ENCODE measurements at regions of chr16 and their contacts with region 1.

Region 1: GRCh38 chr16:87076950-87077749 is 240.0 kb downstream of the C16orf95 start:
- DNase-seq: peak; percentile 70 to 81 (median 71)
- H3K4me3 ChIP-seq: no peak overlapping the region
- H3K27ac ChIP-seq: no peak overlapping the region
- H3K4me1 ChIP-seq: no peaks in the 10 kb centered on the region
- H3K27me3 ChIP-seq: peaks cover 0 to 7% (median 0%) of the 10 kb centered on the region in 5 experiments

Region 2: GRCh38 chr16:87056083-87056482 is 21.1 kb before region 1 on chr16:
- CTCF ChIA-PET with region 1: interaction called, 66 read pairs
- POLR2A ChIA-PET with region 1: no interaction called
- DNase-seq: no peak
- H3K4me3 ChIP-seq: no peak overlapping the region
- H3K27ac ChIP-seq: no peak overlapping the region
- H3K4me1 ChIP-seq: peaks cover 7 to 10% (median 9%) of the 10 kb centered on the region in 4 experiments
- H3K27me3 ChIP-seq: peaks cover 0 to 45% (median 5%) of the 10 kb centered on the region in 5 experiments

Region 3: DNA sequence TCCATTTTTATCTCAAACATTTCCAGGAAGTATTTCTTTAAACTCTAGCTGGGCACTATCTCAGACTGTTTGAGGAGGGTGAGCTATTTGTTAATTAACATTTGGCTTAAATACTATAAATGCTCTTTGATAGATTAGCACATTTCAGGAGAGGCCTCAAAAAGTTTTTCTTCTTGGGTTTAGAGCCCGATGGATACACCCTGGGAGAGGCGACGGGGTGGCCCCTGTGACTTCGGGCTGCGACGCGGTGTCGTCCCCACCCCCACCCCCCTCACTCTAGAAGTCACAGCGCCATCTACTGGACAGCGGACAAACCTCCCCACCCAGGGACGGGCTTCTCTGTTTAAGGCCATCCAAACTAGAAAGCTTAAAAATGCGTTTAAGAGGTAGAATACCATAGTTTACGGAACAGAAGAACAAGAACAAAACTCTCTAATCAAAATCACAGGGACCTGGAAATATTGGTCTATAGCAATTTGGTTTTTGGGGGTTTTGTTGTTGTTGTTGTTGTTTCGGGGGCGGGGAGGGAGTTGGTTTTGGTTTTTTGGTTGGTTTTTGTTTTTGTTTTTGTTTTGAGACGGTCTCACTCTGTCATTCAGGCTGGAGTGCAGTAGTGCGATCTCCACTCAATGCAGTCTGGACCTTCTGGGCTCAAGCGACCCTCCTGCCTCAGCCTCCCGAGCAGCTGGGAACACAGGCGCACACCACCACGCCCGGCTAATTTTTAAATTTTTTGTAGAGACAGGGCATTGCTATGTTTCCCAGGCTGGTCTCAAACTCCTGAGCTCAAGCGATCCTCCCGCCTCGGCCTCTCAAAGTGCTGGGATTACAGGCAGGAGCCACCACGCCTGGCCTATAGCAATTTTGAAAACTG is 14.3 kb before region 1 on chr16:
- CTCF ChIA-PET with region 1: interaction called, 66 read pairs
- POLR2A ChIA-PET with region 1: no interaction called
- DNase-seq: peak; percentile 74 to 84 (median 80)
- H3K4me3 ChIP-seq: peak overlapping the region in 2 of 7 experiments; percentile 37 to 46
- H3K27ac ChIP-seq: no peak overlapping the region
- H3K4me1 ChIP-seq: peaks cover 0 to 31% (median 20%) of the 10 kb centered on the region in 4 experiments
- H3K27me3 ChIP-seq: peaks cover 0 to 40% (median 0%) of the 10 kb centered on the region in 5 experiments